Activated CD4-positive, alpha-beta memory T cell treated with anti-CD3 and anti-CD28 coated beads for 36 hours (primary cell): ENCODE measurements at regions of chr12 and their contacts with region 1.

Region 1: DNA sequence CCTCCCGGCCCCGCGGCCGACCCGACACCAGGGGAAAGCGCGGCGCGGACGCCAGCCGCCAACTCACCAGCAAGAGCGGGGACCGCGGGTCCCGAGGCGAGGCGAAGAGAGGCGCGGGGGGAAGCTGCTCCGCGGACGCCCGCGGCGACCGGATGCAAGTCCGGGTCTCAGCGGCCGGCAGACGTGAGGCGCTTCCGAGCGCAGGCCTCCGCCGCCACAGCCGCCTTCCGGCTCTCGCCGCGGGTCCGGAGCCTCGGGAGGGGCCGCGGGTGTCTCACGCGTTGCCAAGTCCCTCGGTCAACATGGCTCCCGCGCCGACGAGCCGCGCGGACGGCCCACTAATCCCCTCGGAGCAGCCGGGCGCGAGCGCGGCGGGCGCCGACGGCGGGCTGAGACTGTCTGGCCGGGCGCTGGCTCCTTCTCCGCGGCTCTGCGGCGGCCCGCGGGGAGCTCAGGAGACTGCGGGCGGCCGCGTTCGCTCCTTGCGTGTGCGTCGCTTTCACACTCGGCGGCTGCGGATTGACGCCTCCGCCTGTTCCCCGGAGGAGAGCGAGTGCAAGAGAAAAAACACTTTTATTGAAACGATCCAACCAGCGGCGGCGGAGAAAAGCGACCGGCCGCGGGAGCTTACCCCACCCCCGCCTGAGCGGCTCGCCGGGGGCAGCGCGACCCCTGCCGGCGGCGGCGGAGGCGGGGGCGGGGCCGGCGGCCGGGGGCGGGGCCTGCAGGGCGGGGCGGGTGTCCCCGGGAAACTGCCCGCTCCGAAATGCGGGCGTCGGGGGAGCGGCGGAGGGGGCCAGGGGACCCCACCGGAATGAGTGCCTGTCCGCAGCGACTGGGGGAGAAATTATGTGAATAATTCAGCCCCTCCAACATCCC is at the start of gene CDK17:
- DNase-seq: peak; percentile 92
- H3K4me3 Mint-ChIP-seq: peak within 1 kb of the TSS; percentile 86
- H3K27ac Mint-ChIP-seq: peak within 1 kb of the TSS; percentile 97
- H3K4me1 Mint-ChIP-seq: peaks cover 39% of the 10 kb centered on the region
- H3K27me3 Mint-ChIP-seq: no peaks in the 10 kb centered on the region
- total RNA-seq, gene CDK17: 34.5 to 35.7 TPM

Region 2: GRCh38 chr12:96061864-96062453 is 338.2 kb before region 1 on chr12:
- CTCF ChIA-PET with region 1: interaction called, 6 read pairs
- POLR2A ChIA-PET with region 1: no interaction called
- intact Hi-C with region 1: loop called (anchors 1 kb)
- DNase-seq: peak; percentile 83
- H3K4me3 Mint-ChIP-seq: no peak overlapping the region
- H3K27ac Mint-ChIP-seq: no peak overlapping the region
- H3K4me1 Mint-ChIP-seq: peaks cover 26% of the 10 kb centered on the region
- H3K27me3 Mint-ChIP-seq: no peaks in the 10 kb centered on the region

Region 3: DNA sequence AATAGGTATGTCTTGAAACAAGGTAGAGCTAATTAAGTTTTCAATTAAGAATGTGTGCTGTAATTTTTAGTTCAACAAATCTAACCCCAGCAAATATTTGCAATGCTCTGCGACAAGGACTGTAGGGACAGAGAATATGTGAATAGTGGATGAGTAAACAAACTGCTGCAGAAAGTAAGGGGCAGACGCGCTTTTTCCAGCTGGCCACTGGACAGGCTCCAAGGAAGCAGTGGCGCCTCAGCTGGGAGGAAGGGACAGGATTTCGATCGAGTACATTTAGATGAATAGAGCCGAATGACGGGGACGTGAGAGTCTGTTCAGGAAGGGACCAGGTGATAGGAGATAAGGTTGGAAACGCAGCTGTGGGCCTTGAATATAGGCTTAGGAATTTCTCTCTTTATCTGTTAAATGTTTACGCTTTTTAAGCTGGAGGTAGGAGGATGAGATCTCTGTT is 136.7 kb before region 1 on chr12:
- CTCF ChIA-PET with region 1: interaction called, 10 read pairs
- POLR2A ChIA-PET with region 1: interaction called, 3 read pairs
- intact Hi-C with region 1: no loop called
- DNase-seq: no peak
- H3K4me3 Mint-ChIP-seq: no peak overlapping the region
- H3K27ac Mint-ChIP-seq: peak overlapping the region; percentile 6
- H3K4me1 Mint-ChIP-seq: peaks cover 29% of the 10 kb centered on the region
- H3K27me3 Mint-ChIP-seq: no peaks in the 10 kb centered on the region

Region 4: DNA sequence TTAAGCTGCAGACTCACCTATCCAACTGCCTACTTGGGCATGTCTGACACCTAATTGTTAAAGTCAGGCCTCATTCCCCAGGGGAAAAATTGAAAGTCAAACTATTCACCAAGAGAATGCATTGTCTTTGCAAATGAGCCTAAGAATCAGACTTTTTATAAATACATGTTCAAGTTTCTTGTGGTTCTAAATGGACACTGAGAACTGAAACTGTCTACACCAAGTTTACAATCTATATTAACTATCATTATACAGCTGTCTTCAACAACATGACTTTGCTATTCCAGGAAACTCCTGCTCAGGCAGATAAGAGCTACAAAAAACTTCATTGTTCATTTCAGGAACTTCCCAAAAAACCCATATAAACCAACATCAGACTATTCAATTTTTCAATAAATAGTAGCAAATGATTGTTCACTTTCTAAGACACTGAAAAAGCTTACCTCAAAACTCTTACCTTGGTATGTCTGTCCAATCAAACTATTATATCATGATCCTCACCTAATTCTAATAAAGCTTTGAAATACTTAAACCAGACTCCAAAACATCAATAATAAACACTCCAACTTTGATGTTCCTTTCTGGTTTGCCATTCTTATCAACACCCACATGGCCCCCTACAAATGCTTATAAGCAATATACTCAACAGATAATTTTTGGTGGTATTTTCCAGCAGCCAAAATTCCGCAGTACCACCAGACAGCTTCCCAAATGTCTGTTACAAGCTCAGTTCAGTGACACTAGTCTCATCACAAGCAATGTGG is 24.1 kb before region 1 on chr12:
- CTCF ChIA-PET with region 1: interaction called, 13 read pairs
- POLR2A ChIA-PET with region 1: interaction called, 18 read pairs
- intact Hi-C with region 1: loop called (anchors 1 kb)
- DNase-seq: no peak
- H3K4me3 Mint-ChIP-seq: no peak overlapping the region
- H3K27ac Mint-ChIP-seq: peak overlapping the region; percentile 96
- H3K4me1 Mint-ChIP-seq: peaks cover 75% of the 10 kb centered on the region
- H3K27me3 Mint-ChIP-seq: no peaks in the 10 kb centered on the region

Region 5: GRCh38 chr12:96445691-96446583 is 45.8 kb after region 1 on chr12:
- CTCF ChIA-PET with region 1: interaction called, 14 read pairs
- POLR2A ChIA-PET with region 1: interaction called, 16 read pairs
- intact Hi-C with region 1: loop called (anchors 1 kb)
- DNase-seq: peak; percentile 72
- H3K4me3 Mint-ChIP-seq: peak overlapping the region; percentile 60
- H3K27ac Mint-ChIP-seq: peak overlapping the region; percentile 95
- H3K4me1 Mint-ChIP-seq: peaks cover 38% of the 10 kb centered on the region
- H3K27me3 Mint-ChIP-seq: no peaks in the 10 kb centered on the region

Region 6: DNA sequence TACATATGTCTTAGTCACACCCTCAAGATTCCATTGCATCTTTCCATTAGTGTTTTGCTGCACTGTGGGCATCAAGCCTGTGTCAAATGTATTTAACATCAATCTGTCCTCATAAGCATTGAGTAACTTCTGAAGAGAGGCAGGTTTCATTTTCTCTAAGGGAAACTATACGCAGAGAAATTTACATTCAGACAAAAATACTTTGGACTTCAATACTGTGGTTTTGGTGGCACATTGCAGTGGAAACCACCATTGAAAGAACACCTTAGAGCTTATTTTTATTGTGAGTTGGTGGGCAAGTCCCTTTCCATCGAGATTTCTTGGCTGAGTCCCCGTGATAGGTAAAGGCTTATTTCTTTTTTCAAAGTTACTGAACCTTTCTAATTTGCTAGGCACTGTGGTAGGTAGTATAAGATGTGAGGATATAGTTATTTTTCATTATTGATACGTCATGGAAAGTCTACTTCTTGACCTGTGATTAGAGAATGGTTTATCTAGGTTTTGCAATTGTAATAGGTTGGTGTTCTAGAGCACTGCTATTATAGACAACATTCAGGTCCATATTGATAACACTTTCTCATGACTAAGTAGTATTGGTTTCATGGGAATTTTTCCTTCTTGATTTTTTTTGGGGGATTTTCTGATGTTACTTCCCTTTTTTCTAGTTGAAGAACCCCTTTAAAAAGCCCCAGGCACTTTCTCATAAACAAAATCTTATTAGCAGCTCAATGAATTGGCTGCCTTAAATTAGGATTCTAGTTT is 171.1 kb after region 1 on chr12:
- CTCF ChIA-PET with region 1: no interaction called
- POLR2A ChIA-PET with region 1: no interaction called
- intact Hi-C with region 1: loop called (anchors 2 kb)
- DNase-seq: peak; percentile 33
- H3K4me3 Mint-ChIP-seq: peak overlapping the region; percentile 40
- H3K27ac Mint-ChIP-seq: peak overlapping the region; percentile 65
- H3K4me1 Mint-ChIP-seq: peaks cover 26% of the 10 kb centered on the region
- H3K27me3 Mint-ChIP-seq: peaks cover 4% of the 10 kb centered on the region